ENCODE measurements at regions of chr11 and their contacts with region 1.

Region 1: DNA sequence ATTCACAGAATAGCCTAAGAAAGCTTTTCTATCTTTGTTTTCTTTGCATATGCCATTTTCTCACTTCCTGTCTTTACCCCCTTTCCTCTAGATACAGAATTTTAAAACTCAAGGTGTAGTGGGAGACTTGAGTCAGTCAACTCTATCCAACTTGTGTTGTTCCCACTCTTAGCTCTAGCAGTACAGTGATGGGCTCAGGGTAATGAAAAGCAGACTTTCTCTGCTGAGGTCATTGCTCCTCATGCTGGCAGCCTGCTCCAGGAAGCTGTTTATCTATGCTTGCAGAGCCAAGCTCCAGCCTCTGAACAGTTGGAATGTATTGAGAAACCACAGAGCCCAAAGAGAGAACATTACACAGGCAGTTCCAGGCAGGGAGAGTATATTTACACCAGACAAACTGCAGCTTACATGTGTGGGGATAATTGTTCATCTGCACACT is 68.1 kb downstream of the CSTPP1 start:
- DNase-seq: peak; percentile 61
- H3K4me3 ChIP-seq: no peak overlapping the region
- H3K27ac ChIP-seq: no peak overlapping the region
- H3K4me1 ChIP-seq: peaks cover 5% of the 10 kb centered on the region
- H3K27me3 ChIP-seq: no peaks in the 10 kb centered on the region
- CTCF ChIP-seq: no peak

Region 2: DNA sequence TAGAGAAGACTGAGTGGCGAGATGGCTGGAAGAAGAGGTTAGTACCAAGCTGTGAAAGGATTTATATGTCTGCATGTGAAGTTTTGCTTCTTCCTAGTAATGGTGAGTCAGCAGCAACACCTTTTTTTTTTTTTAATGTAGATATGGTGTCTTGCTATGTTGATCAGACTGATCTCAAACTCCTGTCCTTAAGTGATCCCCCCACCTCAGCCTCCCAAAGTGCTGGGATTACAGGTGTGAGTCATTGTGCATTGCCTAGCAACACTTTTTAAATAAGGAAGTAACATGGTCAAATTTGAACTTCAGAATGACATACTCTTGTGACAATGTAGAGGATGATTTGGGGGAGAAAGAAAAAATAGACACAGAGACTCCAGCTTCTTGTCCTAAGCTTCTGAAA is 74.5 kb before region 1 on chr11:
- CTCF ChIA-PET with region 1: no interaction called
- dilution Hi-C with region 1: loop called (anchors 5 kb)
- in situ Hi-C with region 1: no loop called
- intact Hi-C with region 1: no loop called
- DNase-seq: peak; percentile 51
- H3K4me3 ChIP-seq: no peak overlapping the region
- H3K27ac ChIP-seq: no peak overlapping the region
- H3K4me1 ChIP-seq: no peaks in the 10 kb centered on the region
- H3K27me3 ChIP-seq: no peaks in the 10 kb centered on the region
- CTCF ChIP-seq: no peak